Activated T-helper 2 cell treated with anti-CD3 and anti-CD28 coated beads, Interferon-gamma antibody, Interleukin-2, Interleukin-4, amounts not matched to agents 10 μg/mL and 5 μg/mL and 100 μg/mL, durations not matched to agents 14 hours and 24 hours and 36 hours (primary cell): ENCODE measurements at regions of chr6 and their contacts with region 1.

Region 1: GRCh38 chr6:12637960-12638641 is 78.5 kb upstream of the PHACTR1 start:
- DNase-seq: peak; percentile 12
- H3K4me3 Mint-ChIP-seq: no peak overlapping the region
- H3K27ac Mint-ChIP-seq: no peak overlapping the region
- H3K4me1 Mint-ChIP-seq: peaks cover 6% of the 10 kb centered on the region
- H3K27me3 Mint-ChIP-seq: peaks cover 11% of the 10 kb centered on the region

Region 2: GRCh38 chr6:12595161-12595811 is 42.8 kb before region 1 on chr6:
- intact Hi-C with region 1: no loop called
- DNase-seq: no peak
- H3K4me3 Mint-ChIP-seq: no peak overlapping the region
- H3K27ac Mint-ChIP-seq: no peak overlapping the region
- H3K4me1 Mint-ChIP-seq: no peaks in the 10 kb centered on the region
- H3K27me3 Mint-ChIP-seq: peaks cover 8% of the 10 kb centered on the region

Region 3: DNA sequence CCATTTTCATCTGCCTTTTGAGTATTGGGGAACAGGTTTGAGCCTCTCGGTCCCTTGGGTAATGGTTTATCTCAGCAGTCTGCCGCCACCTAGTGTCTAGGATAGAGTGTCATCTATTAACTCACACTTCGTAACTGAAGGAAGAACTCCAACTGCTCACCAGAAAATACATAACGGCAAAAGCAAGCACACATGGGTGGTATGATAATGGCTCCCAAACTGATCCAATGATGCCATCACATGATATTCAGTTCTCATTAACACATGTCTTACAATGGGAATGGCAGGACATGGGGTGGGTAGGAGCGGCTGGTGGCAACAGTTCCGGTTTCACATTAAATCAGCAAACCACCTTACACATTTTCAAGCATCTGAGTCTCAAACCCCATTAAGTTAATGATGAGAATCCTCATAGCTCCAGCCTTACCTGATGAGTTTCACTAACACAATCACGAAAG is 32.2 kb before region 1 on chr6:
- intact Hi-C with region 1: no loop called
- DNase-seq: peak; percentile 22
- H3K4me3 Mint-ChIP-seq: peak overlapping the region; percentile 38
- H3K27ac Mint-ChIP-seq: no peak overlapping the region
- H3K4me1 Mint-ChIP-seq: peaks cover 9% of the 10 kb centered on the region
- H3K27me3 Mint-ChIP-seq: peaks cover 10% of the 10 kb centered on the region

Region 4: GRCh38 chr6:12895721-12896120 is 257.6 kb after region 1 on chr6:
- intact Hi-C with region 1: loop called (anchors 2 kb)
- DNase-seq: no peak
- H3K4me3 Mint-ChIP-seq: no peak overlapping the region
- H3K27ac Mint-ChIP-seq: no peak overlapping the region
- H3K4me1 Mint-ChIP-seq: no peaks in the 10 kb centered on the region
- H3K27me3 Mint-ChIP-seq: no peaks in the 10 kb centered on the region